ENCODE measurements at regions of chr12 and their contacts with region 1.

Region 1: GRCh38 chr12:123043536-123044001 is 63.1 kb downstream of the ARL6IP4 start:
- DNase-seq: peak; percentile 75
- ATAC-seq: peak; percentile 94
- H3K4me3 ChIP-seq: no peak overlapping the region
- H3K4me3 Mint-ChIP-seq: peak overlapping the region; percentile 27
- H3K27ac ChIP-seq: no peak overlapping the region
- H3K27ac Mint-ChIP-seq: peak overlapping the region; percentile 22
- H3K4me1 ChIP-seq: peaks cover 9 to 11% of the 10 kb centered on the region in 2 donors
- H3K4me1 Mint-ChIP-seq: peaks cover 29% of the 10 kb centered on the region
- H3K27me3 ChIP-seq: no peaks in the 10 kb centered on the region
- H3K27me3 Mint-ChIP-seq: no peaks in the 10 kb centered on the region
- CTCF ChIP-seq: peak; percentile 55

Region 2: DNA sequence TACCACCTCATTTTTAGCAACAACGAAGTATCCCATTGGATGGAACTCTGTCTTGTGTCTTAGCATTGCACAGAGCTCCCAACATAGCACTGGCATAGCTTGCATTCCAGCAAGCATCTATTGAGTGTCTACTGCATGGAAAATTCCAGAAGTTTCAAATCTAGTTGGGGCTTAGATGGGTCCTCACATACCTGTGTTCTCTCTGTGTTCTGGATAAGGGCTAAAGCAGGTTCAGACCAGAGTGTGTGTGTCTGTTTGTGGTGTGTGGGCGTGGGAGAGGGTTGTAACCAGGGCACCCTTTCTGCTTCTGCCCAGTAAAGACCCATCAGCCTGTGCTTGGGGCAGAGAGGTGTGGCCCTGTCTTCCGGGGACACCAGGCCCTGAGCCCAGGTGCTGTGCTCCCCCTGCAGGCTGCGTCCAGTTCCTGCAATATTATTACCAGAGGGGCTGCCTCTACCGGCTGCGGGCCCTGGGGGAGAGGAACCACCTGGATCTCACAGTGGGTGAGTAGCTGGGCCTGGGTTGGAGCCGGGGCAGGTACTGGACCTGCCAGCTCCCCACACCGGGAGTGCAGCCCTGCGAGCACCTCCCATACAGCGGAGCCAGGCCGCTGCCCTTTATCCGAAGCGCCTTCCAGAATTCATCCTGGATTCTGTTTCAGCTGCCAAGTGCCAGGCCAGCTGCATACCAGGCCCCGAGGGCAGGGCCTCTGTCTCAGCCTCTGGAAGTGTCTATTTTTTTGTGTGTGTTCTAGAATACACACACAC is 1270.4 kb before region 1 on chr12:
- CTCF ChIA-PET with region 1: no interaction called
- POLR2A ChIA-PET with region 1: no interaction called
- intact Hi-C with region 1: no loop called
- DNase-seq: peak; percentile 87
- ATAC-seq: peak; percentile 96
- H3K4me3 ChIP-seq: no peak overlapping the region
- H3K4me3 Mint-ChIP-seq: no peak overlapping the region
- H3K27ac ChIP-seq: no peak overlapping the region
- H3K27ac Mint-ChIP-seq: peak overlapping the region; percentile 82
- H3K4me1 ChIP-seq: peaks cover 15 to 25% of the 10 kb centered on the region in 2 donors
- H3K4me1 Mint-ChIP-seq: peaks cover 16% of the 10 kb centered on the region
- H3K27me3 ChIP-seq: no peaks in the 10 kb centered on the region
- H3K27me3 Mint-ChIP-seq: no peaks in the 10 kb centered on the region
- CTCF ChIP-seq: peak; percentile 87

Region 3: DNA sequence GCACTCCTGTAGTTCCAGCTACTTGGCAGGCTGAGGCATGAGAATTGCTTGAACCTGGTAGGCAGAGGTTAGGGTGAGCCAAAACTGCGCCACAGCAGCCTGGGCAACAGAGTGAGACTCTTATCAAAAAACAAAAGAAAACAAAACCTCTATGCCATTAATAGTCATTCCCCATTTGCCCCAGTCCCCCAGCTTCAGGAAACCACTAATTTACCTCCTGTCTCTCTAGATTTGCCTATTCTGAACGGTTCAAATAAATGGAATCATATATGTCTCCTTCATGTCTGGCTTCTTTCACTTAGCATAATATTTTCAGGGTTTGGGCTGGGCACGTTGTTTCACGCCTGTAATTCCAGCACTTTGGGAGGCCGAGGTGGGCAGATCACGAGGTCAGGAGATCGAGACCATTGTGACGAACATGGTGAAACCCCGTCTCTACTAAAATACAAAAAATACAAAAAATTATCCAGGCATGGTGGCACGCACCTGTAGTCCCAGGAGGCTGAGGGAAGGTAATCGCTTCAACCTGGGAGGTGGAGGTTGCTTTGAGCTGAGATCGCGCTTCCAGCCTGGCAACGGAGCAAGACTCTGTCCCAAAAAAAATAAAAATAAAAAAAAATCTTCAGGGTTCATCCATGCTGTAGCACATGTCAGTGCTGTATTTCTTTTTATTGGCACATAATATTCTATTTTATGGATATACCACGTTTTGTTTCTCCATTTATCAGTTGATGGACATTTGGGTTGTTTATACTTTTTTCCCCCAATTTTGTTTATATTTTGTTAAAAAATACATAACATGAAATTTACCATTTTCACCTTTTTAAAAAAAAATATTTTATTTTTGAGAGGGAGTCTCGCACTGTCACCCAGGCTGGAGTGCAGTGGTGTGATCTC is 484.6 kb before region 1 on chr12:
- CTCF ChIA-PET with region 1: no interaction called
- POLR2A ChIA-PET with region 1: no interaction called
- intact Hi-C with region 1: no loop called
- DNase-seq: peak; percentile 66
- ATAC-seq: peak; percentile 41
- H3K4me3 ChIP-seq: peak overlapping the region in 3 of 5 experiments; percentile 4 to 32 (median 27)
- H3K4me3 Mint-ChIP-seq: peak overlapping the region; percentile 85
- H3K27ac ChIP-seq: peak overlapping the region; percentile 46 to 84
- H3K27ac Mint-ChIP-seq: peak overlapping the region; percentile 93
- H3K4me1 ChIP-seq: peaks cover 0 to 27% of the 10 kb centered on the region in 2 donors
- H3K4me1 Mint-ChIP-seq: peaks cover 15% of the 10 kb centered on the region
- H3K27me3 ChIP-seq: no peaks in the 10 kb centered on the region
- H3K27me3 Mint-ChIP-seq: no peaks in the 10 kb centered on the region
- CTCF ChIP-seq: no peak

Region 4: GRCh38 chr12:122569288-122569687 is 474.3 kb before region 1 on chr12:
- CTCF ChIA-PET with region 1: no interaction called
- POLR2A ChIA-PET with region 1: no interaction called
- intact Hi-C with region 1: no loop called
- DNase-seq: no peak
- ATAC-seq: no peak
- H3K4me3 ChIP-seq: no peak overlapping the region
- H3K4me3 Mint-ChIP-seq: no peak overlapping the region
- H3K27ac ChIP-seq: no peak overlapping the region
- H3K27ac Mint-ChIP-seq: no peak overlapping the region
- H3K4me1 ChIP-seq: no peaks in the 10 kb centered on the region
- H3K4me1 Mint-ChIP-seq: no peaks in the 10 kb centered on the region
- H3K27me3 ChIP-seq: no peaks in the 10 kb centered on the region
- H3K27me3 Mint-ChIP-seq: no peaks in the 10 kb centered on the region
- CTCF ChIP-seq: no peak

Region 5: GRCh38 chr12:123085730-123086487 is 42.3 kb after region 1 on chr12:
- CTCF ChIA-PET with region 1: interaction called, 7 read pairs
- POLR2A ChIA-PET with region 1: no interaction called
- intact Hi-C with region 1: loop called (anchors 5 kb)
- DNase-seq: no peak
- ATAC-seq: no peak
- H3K4me3 ChIP-seq: no peak overlapping the region
- H3K4me3 Mint-ChIP-seq: peak overlapping the region; percentile 10
- H3K27ac ChIP-seq: no peak overlapping the region
- H3K27ac Mint-ChIP-seq: peak overlapping the region; percentile 6
- H3K4me1 ChIP-seq: peaks cover 59 to 86% of the 10 kb centered on the region in 2 donors
- H3K4me1 Mint-ChIP-seq: peaks cover 70% of the 10 kb centered on the region
- H3K27me3 ChIP-seq: no peaks in the 10 kb centered on the region
- H3K27me3 Mint-ChIP-seq: no peaks in the 10 kb centered on the region
- CTCF ChIP-seq: no peak

Region 6: DNA sequence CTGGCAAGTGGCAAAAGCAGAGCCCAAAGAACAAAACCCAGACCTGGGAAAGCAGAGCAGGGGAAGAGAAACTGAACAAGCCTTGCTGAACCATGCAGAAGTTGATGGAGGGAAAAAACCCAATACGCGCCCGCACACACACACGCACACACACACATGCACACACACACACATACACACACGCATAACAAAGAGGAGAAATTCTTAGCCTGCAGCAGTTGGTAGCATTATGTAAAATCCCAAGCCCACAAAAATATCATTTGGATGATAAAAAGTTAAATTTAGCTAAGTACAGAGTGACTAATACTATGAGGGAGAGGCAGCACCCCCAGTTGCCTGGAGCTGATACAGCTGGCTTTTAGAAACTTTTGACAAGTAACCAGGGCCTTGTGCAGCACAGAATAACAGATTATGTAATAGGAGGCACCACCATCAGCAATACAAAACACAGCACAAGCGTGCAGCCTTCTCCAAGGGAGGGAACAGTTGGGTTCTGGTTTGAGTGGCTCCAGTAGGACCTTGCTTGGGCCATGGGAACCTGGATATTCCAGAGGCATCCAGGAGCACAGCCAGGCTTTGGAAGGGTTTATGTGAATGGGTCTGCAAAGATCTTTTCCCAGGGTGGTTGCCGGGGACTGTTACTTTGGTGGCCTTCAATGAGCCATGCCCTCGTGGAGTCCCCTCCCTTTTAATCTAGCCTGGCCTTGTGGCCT is 72.0 kb after region 1 on chr12:
- CTCF ChIA-PET with region 1: interaction called, 19 read pairs
- POLR2A ChIA-PET with region 1: no interaction called
- intact Hi-C with region 1: no loop called
- DNase-seq: peak; percentile 89
- ATAC-seq: peak; percentile 66
- H3K4me3 ChIP-seq: peak overlapping the region in 2 of 5 experiments; percentile 12 to 31
- H3K4me3 Mint-ChIP-seq: peak overlapping the region; percentile 67
- H3K27ac ChIP-seq: peak overlapping the region; percentile 72 to 85
- H3K27ac Mint-ChIP-seq: peak overlapping the region; percentile 89
- H3K4me1 ChIP-seq: peaks cover 54 to 62% of the 10 kb centered on the region in 2 donors
- H3K4me1 Mint-ChIP-seq: peaks cover 61% of the 10 kb centered on the region
- H3K27me3 ChIP-seq: no peaks in the 10 kb centered on the region
- H3K27me3 Mint-ChIP-seq: no peaks in the 10 kb centered on the region
- CTCF ChIP-seq: no peak

Region 7: GRCh38 chr12:123150744-123151456 is 107.3 kb after region 1 on chr12 and contains the start of gene PITPNM2:
- CTCF ChIA-PET with region 1: interaction called, 69 read pairs
- POLR2A ChIA-PET with region 1: no interaction called
- intact Hi-C with region 1: loop called (anchors 1 kb)
- DNase-seq: peak; percentile 80
- ATAC-seq: peak; percentile 85
- H3K4me3 ChIP-seq: peak within 1 kb of the TSS; percentile 45 to 78 (median 68)
- H3K4me3 Mint-ChIP-seq: peak within 1 kb of the TSS; percentile 86
- H3K27ac ChIP-seq: peak within 1 kb of the TSS in 1 of 2 donors; percentile 78
- H3K27ac Mint-ChIP-seq: peak within 1 kb of the TSS; percentile 83
- H3K4me1 ChIP-seq: peaks cover 10 to 29% of the 10 kb centered on the region in 2 donors
- H3K4me1 Mint-ChIP-seq: peaks cover 24% of the 10 kb centered on the region
- H3K27me3 ChIP-seq: peaks cover 0 to 7% (median 2%) of the 10 kb centered on the region in 4 experiments
- H3K27me3 Mint-ChIP-seq: no peaks in the 10 kb centered on the region
- CTCF ChIP-seq: no peak
- total RNA-seq, gene PITPNM2: 28.6 and 30.3 TPM in 2 replicates

Region 8: DNA sequence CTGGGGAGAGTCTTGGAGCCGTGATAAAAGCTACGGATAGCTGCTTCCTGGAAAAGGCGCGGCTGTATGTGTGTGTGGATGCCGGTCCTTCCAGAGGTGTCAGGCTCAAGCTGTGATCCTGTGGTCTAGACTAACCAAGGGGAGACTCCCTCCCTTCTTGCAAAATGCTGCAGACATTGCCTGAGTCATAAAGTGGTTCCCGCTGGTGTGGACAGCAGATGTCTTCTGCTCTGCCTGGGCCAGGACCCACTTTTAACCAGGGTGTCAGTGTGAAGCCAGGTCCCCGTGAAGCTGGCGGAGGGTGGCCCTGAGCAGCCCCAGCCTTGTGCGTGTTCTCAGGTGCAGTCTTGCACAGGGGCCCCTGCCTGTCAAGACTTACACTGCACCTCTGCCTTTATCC is 891.3 kb after region 1 on chr12:
- CTCF ChIA-PET with region 1: no interaction called
- POLR2A ChIA-PET with region 1: no interaction called
- intact Hi-C with region 1: no loop called
- DNase-seq: no peak
- ATAC-seq: no peak
- H3K4me3 ChIP-seq: no peak overlapping the region
- H3K4me3 Mint-ChIP-seq: no peak overlapping the region
- H3K27ac ChIP-seq: no peak overlapping the region
- H3K27ac Mint-ChIP-seq: no peak overlapping the region
- H3K4me1 ChIP-seq: peaks cover 20 to 22% of the 10 kb centered on the region in 2 donors
- H3K4me1 Mint-ChIP-seq: peaks cover 25% of the 10 kb centered on the region
- H3K27me3 ChIP-seq: no peaks in the 10 kb centered on the region
- H3K27me3 Mint-ChIP-seq: no peaks in the 10 kb centered on the region
- CTCF ChIP-seq: no peak